ENCODE measurements at regions of chr2 and their contacts with region 1.

Region 1: DNA sequence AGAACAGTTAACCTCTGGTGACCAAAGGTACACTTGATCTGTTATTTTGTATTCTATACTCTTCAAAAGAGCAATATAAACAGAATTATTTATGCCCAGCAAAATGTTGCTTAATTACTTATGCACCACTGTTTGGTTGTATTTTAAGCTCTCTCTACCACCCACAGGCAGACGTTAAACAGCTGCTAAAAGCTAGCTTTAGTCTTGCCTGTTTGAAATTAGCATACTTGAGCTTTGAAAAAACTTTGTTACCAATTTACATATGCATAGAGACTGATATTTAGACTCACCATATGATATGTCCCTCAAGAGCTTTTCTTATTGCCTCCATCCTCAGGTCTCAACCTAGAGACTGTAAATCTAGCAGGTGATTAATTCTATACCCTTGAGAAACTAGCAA is 426.9 kb downstream of the NR4A2 start:
- DNase-seq: no peak
- ATAC-seq: no peak
- H3K4me3 ChIP-seq: no peak overlapping the region
- H3K4me3 Mint-ChIP-seq: no peak overlapping the region
- H3K27ac ChIP-seq: no peak overlapping the region
- H3K27ac Mint-ChIP-seq: no peak overlapping the region
- H3K4me1 ChIP-seq: no peaks in the 10 kb centered on the region
- H3K4me1 Mint-ChIP-seq: no peaks in the 10 kb centered on the region
- H3K27me3 ChIP-seq: no peaks in the 10 kb centered on the region
- H3K27me3 Mint-ChIP-seq: no peaks in the 10 kb centered on the region
- CTCF ChIP-seq: no peak

Region 2: DNA sequence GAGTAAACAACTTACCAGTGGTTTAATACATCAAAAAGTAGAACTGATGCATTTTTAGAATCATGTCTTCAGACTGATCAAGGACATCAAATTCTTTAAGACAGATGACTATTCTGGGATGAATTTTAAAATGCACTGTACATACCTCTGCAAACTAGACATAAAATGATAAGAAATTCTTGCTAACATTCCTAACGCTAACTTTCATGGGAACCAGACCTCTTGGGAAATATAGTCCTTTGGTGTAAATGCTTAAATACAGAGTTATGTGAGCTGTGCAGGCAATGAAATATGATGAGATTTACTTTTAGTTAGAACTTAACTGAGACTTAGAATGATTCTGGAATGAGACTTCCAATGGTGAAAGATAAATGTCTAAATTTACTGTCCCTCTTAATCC is 135.1 kb before region 1 on chr2:
- CTCF ChIA-PET with region 1: no interaction called
- POLR2A ChIA-PET with region 1: no interaction called
- intact Hi-C with region 1: no loop called
- DNase-seq: no peak
- ATAC-seq: no peak
- H3K4me3 ChIP-seq: no peak overlapping the region
- H3K4me3 Mint-ChIP-seq: no peak overlapping the region
- H3K27ac ChIP-seq: no peak overlapping the region
- H3K27ac Mint-ChIP-seq: no peak overlapping the region
- H3K4me1 ChIP-seq: no peaks in the 10 kb centered on the region
- H3K4me1 Mint-ChIP-seq: no peaks in the 10 kb centered on the region
- H3K27me3 ChIP-seq: no peaks in the 10 kb centered on the region
- H3K27me3 Mint-ChIP-seq: no peaks in the 10 kb centered on the region
- CTCF ChIP-seq: no peak

Region 3: GRCh38 chr2:155867566-155867965 is 38.1 kb before region 1 on chr2:
- CTCF ChIA-PET with region 1: no interaction called
- POLR2A ChIA-PET with region 1: no interaction called
- intact Hi-C with region 1: loop called in 1 of 2 experiments (anchors 1 kb)
- DNase-seq: no peak
- ATAC-seq: no peak
- H3K4me3 ChIP-seq: no peak overlapping the region
- H3K4me3 Mint-ChIP-seq: no peak overlapping the region
- H3K27ac ChIP-seq: no peak overlapping the region
- H3K27ac Mint-ChIP-seq: no peak overlapping the region
- H3K4me1 ChIP-seq: no peaks in the 10 kb centered on the region
- H3K4me1 Mint-ChIP-seq: no peaks in the 10 kb centered on the region
- H3K27me3 ChIP-seq: no peaks in the 10 kb centered on the region
- H3K27me3 Mint-ChIP-seq: no peaks in the 10 kb centered on the region
- CTCF ChIP-seq: no peak

Region 4: DNA sequence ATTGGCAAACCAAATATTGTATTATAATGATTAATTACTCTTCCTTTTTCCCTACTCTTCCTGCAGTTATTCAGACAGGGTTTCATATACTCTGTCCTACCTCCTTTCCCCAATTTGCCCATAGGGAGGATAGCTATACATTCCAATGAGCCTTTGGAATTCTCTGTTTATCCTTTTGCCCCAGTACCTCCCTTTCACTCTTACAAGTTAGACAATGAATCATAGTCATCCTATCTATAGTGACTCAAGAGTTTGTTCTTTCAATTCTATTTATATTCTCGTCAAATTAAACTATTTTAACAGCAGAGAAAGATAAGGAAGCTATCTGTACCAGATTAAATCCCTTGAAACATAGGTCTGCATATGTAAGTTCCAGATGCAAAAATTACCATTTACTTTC is 10.6 kb before region 1 on chr2:
- CTCF ChIA-PET with region 1: interaction called, 3 read pairs
- POLR2A ChIA-PET with region 1: no interaction called
- intact Hi-C with region 1: loop called in 1 of 2 experiments (anchors 1 kb)
- DNase-seq: no peak
- ATAC-seq: no peak
- H3K4me3 ChIP-seq: no peak overlapping the region
- H3K4me3 Mint-ChIP-seq: no peak overlapping the region
- H3K27ac ChIP-seq: no peak overlapping the region
- H3K27ac Mint-ChIP-seq: no peak overlapping the region
- H3K4me1 ChIP-seq: no peaks in the 10 kb centered on the region
- H3K4me1 Mint-ChIP-seq: no peaks in the 10 kb centered on the region
- H3K27me3 ChIP-seq: no peaks in the 10 kb centered on the region
- H3K27me3 Mint-ChIP-seq: no peaks in the 10 kb centered on the region
- CTCF ChIP-seq: no peak

Region 5: GRCh38 chr2:155944218-155944617 is 38.6 kb after region 1 on chr2:
- CTCF ChIA-PET with region 1: no interaction called
- POLR2A ChIA-PET with region 1: no interaction called
- intact Hi-C with region 1: no loop called
- DNase-seq: no peak
- ATAC-seq: no peak
- H3K4me3 ChIP-seq: no peak overlapping the region
- H3K4me3 Mint-ChIP-seq: no peak overlapping the region
- H3K27ac ChIP-seq: no peak overlapping the region
- H3K27ac Mint-ChIP-seq: no peak overlapping the region
- H3K4me1 ChIP-seq: no peaks in the 10 kb centered on the region
- H3K4me1 Mint-ChIP-seq: no peaks in the 10 kb centered on the region
- H3K27me3 ChIP-seq: no peaks in the 10 kb centered on the region
- H3K27me3 Mint-ChIP-seq: no peaks in the 10 kb centered on the region
- CTCF ChIP-seq: no peak